Endothelial cell of umbilical vein (primary cell): ENCODE measurements at regions of chr1 and their contacts with region 1.

Region 1: DNA sequence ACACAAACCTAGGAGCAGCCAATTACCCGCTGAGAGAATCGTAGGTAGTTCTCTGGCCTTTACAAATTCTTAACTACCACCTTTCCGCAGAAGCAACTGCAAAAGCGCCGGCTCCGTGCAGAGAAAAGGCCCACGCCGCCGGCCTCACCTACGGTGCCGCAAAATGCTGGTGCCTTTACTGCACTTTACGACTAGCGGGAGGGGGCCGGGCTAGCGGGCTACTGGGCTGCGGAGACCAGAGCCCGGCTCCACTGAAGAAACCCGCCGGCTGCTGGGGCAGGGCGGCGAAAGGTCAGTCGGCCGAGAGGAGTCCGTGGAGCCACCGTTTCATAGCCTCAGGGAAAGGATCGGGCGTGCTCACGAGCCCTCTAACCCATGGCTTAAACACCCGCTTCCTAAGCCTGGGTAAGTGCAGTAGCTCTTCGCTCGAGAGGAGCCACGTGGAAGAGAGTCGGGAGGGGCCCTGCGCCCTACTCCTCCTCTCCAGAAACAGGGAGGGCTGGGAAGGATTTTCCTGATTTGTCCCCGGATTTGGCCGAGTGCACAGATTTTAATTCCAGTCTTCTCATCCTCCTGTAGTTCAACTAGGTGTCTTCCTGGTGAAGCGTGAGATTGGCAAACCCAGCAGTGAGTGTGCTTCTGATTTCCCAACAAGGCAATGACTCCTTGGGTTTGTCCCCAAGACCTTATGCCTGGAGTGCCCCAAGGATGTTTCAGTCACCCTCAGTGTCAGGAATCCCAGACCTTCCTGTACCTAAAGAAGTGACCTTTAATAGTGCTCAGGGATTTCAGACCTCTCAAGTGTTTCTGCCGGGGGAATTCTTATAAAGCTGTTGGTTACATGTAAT is at the start of gene DPH5:
- DNase-seq: peak; percentile 93
- H3K4me3 ChIP-seq: peak within 1 kb of the TSS; percentile 70 to 96 (median 76)
- H3K27ac ChIP-seq: peak within 1 kb of the TSS; percentile 75
- H3K4me1 ChIP-seq: peaks cover 22% of the 10 kb centered on the region
- H3K27me3 ChIP-seq: no peaks in the 10 kb centered on the region
- CTCF ChIP-seq: no peak
- POLR2A ChIP-seq: peak; percentile 93
- total RNA-seq, gene DPH5: 31.3 and 37.2 TPM in 2 replicates

Region 2: DNA sequence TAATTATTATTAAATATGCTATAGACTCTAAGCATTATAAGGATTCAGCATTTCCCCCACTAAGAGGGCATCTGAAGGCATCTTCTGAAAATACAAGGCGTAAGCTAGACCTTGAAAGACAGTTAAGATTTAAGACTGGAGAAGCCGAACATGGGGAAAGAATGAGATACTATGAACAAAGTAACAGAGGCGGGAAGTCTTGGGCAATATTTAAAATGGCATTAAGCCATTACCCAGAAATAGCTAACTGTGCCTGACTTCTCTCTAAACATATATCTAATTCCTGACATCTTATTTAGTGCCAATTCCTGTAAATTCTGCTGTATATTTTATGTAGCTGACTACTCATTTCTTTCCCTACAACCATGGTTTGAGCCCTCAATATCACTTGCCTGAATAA is 21.2 kb before region 1 on chr1:
- CTCF ChIA-PET with region 1: no interaction called
- POLR2A ChIA-PET with region 1: interaction called, 3 read pairs
- dilution Hi-C with region 1: no loop called
- intact Hi-C with region 1: loop called (anchors 2 kb)
- DNase-seq: no peak
- H3K4me3 ChIP-seq: no peak overlapping the region
- H3K27ac ChIP-seq: no peak overlapping the region
- H3K4me1 ChIP-seq: peaks cover 38% of the 10 kb centered on the region
- H3K27me3 ChIP-seq: no peaks in the 10 kb centered on the region
- CTCF ChIP-seq: no peak
- POLR2A ChIP-seq: no peak